BJ (cell line): ENCODE measurements at regions of chr3 and their contacts with region 1.

Region 1: DNA sequence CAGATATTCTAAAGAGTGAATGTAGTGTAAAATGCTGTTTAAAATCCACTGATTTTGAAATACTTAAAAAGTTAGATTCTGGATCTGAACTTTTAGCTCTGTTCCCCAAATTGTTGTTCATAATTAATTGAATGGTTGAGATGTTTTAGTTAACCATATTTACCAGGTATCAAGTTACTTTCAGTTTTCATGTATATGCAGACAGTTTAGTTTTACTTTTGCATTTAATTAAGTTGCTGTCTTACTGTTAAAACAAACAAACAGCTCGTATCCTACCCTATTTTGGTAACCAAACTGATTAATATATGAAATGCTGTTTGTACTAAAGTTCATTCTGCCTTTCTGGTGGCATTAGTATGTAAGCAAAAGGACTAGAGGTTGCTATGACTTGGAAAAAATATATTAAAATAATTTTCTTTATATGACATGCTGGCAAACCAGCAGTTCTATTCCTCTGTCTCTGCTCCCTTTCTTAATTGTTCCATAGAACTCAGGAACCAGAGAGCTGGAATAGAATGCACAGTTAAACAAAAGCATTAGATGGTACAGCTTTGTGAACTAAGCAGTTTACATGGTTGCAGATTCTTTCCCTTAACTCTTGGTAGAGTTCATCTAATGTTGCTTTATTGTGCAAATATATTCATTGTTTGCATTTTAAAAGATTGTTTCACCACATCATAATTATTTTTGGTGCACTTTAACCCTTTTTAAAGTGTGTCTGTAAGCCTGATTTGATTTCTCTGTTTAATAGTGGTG is 39.5 kb upstream of the SCAANT1 start:
- DNase-seq: no peak
- H3K4me3 ChIP-seq: no peak overlapping the region
- H3K27me3 ChIP-seq: no peaks in the 10 kb centered on the region
- CTCF ChIP-seq: no peak

Region 2: DNA sequence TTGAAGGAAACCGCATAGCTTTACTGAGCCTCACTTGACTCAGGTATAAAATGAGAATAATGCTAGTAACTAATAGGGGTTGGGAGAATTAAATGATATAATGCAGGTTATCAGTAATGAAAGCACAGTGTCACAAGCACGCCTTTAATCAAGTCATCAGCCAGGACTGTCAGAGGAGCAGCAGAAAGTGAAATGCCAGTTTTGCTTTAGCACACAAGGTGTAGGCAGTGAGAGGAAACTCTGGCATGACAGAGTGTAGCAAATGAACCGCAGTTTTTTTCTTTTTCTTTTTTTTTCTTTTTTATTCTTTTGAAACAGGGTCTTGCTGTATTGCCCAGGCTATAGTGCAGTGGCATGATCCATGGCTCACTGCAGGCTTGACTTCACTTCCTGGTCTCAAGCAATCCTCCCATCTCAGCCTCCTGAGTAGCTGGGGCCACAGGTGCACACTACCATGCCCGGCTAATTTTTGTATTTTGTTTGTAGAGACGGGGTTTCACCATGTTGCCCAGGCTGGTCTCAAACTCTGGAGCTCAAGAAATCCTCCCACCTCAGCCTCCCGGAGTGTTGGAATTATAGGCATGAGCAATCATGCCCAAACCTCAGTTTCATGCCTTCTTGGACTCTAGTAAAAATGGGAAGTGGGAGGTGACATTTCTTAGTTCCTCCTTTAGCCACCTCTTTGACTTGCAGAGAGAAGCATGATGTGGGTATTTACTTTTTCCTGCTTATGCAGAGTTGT is 29.8 kb before region 1 on chr3:
- CTCF ChIA-PET with region 1: no interaction called
- POLR2A ChIA-PET with region 1: no interaction called
- DNase-seq: no peak
- H3K4me3 ChIP-seq: no peak overlapping the region
- H3K27me3 ChIP-seq: no peaks in the 10 kb centered on the region
- CTCF ChIP-seq: no peak

Region 3: DNA sequence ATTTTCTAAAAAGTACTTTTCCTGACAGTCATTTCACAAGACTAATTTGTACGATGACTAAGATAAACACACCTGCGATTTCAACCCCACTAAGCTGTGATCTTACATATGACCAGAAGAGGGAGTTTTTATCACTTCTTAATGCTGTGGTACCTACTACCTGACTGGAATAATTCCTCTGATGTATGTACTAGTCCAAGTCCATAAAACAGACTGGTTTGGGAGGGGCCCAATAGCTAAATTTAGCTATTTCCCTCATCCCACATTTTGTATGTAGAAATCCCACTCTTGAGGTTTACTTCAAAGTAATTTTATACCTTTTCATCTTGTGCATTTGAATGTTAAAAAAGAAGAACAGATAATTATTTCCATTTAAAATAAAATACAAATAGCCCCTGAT is 10.2 kb after region 1 on chr3:
- CTCF ChIA-PET with region 1: interaction called, 10 read pairs
- POLR2A ChIA-PET with region 1: no interaction called
- DNase-seq: no peak
- H3K4me3 ChIP-seq: no peak overlapping the region
- H3K27me3 ChIP-seq: no peaks in the 10 kb centered on the region
- CTCF ChIP-seq: peak; percentile 63

Region 4: DNA sequence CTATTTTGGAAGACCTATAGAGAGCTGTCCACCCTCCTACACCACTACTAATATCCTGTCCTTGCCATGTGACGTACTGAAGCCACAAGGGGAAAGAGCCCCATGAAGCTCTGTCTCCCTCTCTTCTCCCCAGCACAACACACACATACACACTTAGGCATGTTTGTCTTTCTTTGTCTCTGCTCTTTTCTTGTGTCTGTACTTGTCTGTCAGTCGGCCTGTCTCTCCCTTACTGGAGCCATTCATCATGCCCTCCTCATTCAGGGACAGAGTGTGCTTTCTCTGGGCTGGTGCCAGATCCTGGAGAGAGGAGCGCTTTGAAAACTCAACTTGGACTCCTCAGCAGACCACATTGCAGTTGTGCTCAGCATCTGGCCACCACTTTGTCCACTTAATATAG is 24.1 kb after region 1 on chr3:
- CTCF ChIA-PET with region 1: no interaction called
- POLR2A ChIA-PET with region 1: interaction called, 22 read pairs
- DNase-seq: no peak
- H3K4me3 ChIP-seq: no peak overlapping the region
- H3K27me3 ChIP-seq: no peaks in the 10 kb centered on the region
- CTCF ChIP-seq: no peak